CD8-positive, alpha-beta memory T cell (primary cell): ENCODE measurements at regions of chr3 and their contacts with region 1.

Region 1: DNA sequence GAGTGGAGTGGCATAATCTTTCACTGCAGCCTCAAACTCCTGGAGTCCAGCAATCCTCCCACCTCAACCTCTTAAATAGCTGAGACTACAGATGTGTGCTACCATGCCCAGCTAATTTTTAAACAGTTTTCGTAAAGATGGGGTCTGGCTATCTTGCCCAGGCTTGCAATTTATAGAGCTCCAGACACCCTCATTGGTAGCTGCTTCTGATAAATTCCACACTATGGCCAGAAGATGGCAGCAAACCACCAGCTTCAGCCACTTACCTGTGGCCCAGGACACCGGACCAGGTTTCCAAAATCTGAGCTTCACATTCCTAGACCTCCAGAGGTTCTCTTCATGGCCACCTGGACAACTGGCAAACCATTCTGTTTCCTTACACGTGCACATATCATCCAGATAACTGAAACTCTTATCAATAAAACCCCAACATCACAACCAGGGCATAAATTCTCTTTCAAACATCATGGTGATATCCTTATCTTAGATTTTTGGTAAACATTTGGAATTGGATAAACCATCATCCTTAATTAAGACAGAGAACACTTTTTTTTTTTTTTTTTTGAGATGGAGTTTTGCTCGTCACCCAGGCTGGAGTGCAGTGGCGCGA is 28.9 kb downstream of the FBXW12 start:
- DNase-seq: peak; percentile 36 to 76 (median 64)
- H3K4me3 ChIP-seq: no peak overlapping the region
- H3K4me3 Mint-ChIP-seq: no peak overlapping the region
- H3K27ac ChIP-seq: no peak overlapping the region
- H3K27ac Mint-ChIP-seq: no peak overlapping the region
- H3K4me1 ChIP-seq: no peaks in the 10 kb centered on the region
- H3K4me1 Mint-ChIP-seq: no peaks in the 10 kb centered on the region
- H3K27me3 ChIP-seq: no peaks in the 10 kb centered on the region
- H3K27me3 Mint-ChIP-seq: peaks cover 6 to 15% of the 10 kb centered on the region in 2 donors

Region 2: GRCh38 chr3:48135552-48136495 is 265.1 kb before region 1 on chr3:
- CTCF ChIA-PET with region 1: no interaction called
- POLR2A ChIA-PET with region 1: no interaction called
- DNase-seq: no peak
- H3K4me3 ChIP-seq: no peak overlapping the region
- H3K4me3 Mint-ChIP-seq: peak overlapping the region in 1 of 7 donors; percentile 36
- H3K27ac ChIP-seq: no peak overlapping the region
- H3K27ac Mint-ChIP-seq: no peak overlapping the region
- H3K4me1 ChIP-seq: no peaks in the 10 kb centered on the region
- H3K4me1 Mint-ChIP-seq: no peaks in the 10 kb centered on the region
- H3K27me3 ChIP-seq: no peaks in the 10 kb centered on the region
- H3K27me3 Mint-ChIP-seq: no peaks in the 10 kb centered on the region

Region 3: GRCh38 chr3:48446425-48447193 is 45.7 kb after region 1 on chr3 and contains the start of gene ATRIP:
- CTCF ChIA-PET with region 1: interaction called, 17 read pairs
- POLR2A ChIA-PET with region 1: interaction called, 3 read pairs
- DNase-seq: peak; percentile 78 to 89 (median 83)
- H3K4me3 ChIP-seq: peak within 1 kb of the TSS; percentile 88
- H3K4me3 Mint-ChIP-seq: peak within 1 kb of the TSS; percentile 84 to 94 (median 88)
- H3K27ac ChIP-seq: peak within 1 kb of the TSS; percentile 71
- H3K27ac Mint-ChIP-seq: peak within 1 kb of the TSS; percentile 91 to 96 (median 95)
- H3K4me1 ChIP-seq: peaks cover 26% of the 10 kb centered on the region
- H3K4me1 Mint-ChIP-seq: peaks cover 27 to 46% (median 37%) of the 10 kb centered on the region in 3 donors
- H3K27me3 ChIP-seq: no peaks in the 10 kb centered on the region
- H3K27me3 Mint-ChIP-seq: no peaks in the 10 kb centered on the region
- total RNA-seq, gene ATRIP: 22.1 to 22.8 TPM

Region 4: GRCh38 chr3:48507351-48508061 is 106.6 kb after region 1 on chr3:
- CTCF ChIA-PET with region 1: interaction called, 71 read pairs
- POLR2A ChIA-PET with region 1: no interaction called
- DNase-seq: peak; percentile 60 to 86 (median 71)
- H3K4me3 ChIP-seq: no peak overlapping the region
- H3K4me3 Mint-ChIP-seq: peak overlapping the region in 5 of 7 donors; percentile 18 to 62 (median 46)
- H3K27ac ChIP-seq: no peak overlapping the region
- H3K27ac Mint-ChIP-seq: peak overlapping the region; percentile 72 to 89 (median 85)
- H3K4me1 ChIP-seq: peaks cover 38% of the 10 kb centered on the region
- H3K4me1 Mint-ChIP-seq: peaks cover 31 to 48% (median 46%) of the 10 kb centered on the region in 3 donors
- H3K27me3 ChIP-seq: no peaks in the 10 kb centered on the region
- H3K27me3 Mint-ChIP-seq: peaks cover 0 to 9% of the 10 kb centered on the region in 2 donors

Region 5: GRCh38 chr3:48514436-48515227 is 113.7 kb after region 1 on chr3:
- CTCF ChIA-PET with region 1: interaction called, 71 read pairs
- POLR2A ChIA-PET with region 1: no interaction called
- DNase-seq: peak in 2 of 5 donors; percentile 52 to 58
- H3K4me3 ChIP-seq: peak overlapping the region; percentile 8
- H3K4me3 Mint-ChIP-seq: peak overlapping the region in 6 of 7 donors; percentile 62 to 75 (median 68)
- H3K27ac ChIP-seq: no peak overlapping the region
- H3K27ac Mint-ChIP-seq: peak overlapping the region in 7 of 8 donors; percentile 26 to 71 (median 68)
- H3K4me1 ChIP-seq: peaks cover 61% of the 10 kb centered on the region
- H3K4me1 Mint-ChIP-seq: peaks cover 54 to 69% (median 64%) of the 10 kb centered on the region in 3 donors
- H3K27me3 ChIP-seq: no peaks in the 10 kb centered on the region
- H3K27me3 Mint-ChIP-seq: peaks cover 0 to 6% of the 10 kb centered on the region in 2 donors

Region 6: DNA sequence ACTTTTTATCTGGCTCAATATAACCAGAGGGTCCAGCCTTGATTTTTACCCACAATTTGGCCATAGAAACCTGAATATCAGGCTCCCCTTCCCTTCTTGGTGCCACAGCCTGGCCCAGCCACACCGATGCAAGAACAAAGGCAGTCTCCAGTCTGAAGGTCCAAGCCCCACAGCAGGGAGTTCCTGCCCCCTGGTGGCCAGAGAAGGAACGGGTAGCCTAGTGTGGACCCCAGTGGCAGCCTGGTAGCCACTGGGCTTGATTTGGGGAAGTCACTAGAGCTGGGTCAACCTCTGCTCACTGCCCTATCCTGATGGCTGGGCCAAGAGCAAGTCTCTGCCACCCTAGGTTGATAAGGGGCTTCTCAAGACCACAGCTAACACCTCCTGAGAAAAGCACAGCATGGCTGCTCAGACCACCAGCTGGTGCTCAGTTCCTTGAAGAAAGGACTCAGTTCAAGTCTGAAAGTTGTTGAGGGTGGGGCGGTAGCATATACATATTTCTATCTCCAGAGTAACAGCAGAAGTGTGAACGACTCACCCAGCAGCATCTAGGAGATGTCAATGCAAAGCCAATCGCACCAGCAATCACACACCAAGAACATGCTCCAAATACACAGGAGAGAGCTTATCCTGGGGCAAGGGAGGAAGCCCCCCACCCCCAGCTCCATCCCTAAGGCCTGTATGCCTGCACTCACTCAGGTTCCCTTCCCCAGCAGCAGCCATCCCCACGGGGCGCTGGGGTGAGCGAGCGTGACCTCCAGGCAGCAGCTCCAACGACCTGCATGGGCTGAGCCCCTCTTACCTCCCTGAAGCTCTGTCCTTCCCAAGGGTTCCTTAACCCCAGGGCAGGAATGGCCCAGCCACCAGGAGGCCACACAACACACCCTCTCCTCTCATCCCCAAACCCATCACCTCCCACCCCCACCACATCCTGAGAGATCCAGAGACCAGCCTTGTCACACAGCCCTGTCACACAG is 148.1 kb after region 1 on chr3:
- CTCF ChIA-PET with region 1: interaction called, 73 read pairs
- POLR2A ChIA-PET with region 1: interaction called, 3 read pairs
- DNase-seq: peak; percentile 66 to 87 (median 75)
- H3K4me3 ChIP-seq: no peak overlapping the region
- H3K4me3 Mint-ChIP-seq: no peak overlapping the region
- H3K27ac ChIP-seq: no peak overlapping the region
- H3K27ac Mint-ChIP-seq: no peak overlapping the region
- H3K4me1 ChIP-seq: peaks cover 9% of the 10 kb centered on the region
- H3K4me1 Mint-ChIP-seq: peaks cover 0 to 3% (median 3%) of the 10 kb centered on the region in 3 donors
- H3K27me3 ChIP-seq: no peaks in the 10 kb centered on the region
- H3K27me3 Mint-ChIP-seq: peaks cover 0 to 3% of the 10 kb centered on the region in 2 donors

Region 7: DNA sequence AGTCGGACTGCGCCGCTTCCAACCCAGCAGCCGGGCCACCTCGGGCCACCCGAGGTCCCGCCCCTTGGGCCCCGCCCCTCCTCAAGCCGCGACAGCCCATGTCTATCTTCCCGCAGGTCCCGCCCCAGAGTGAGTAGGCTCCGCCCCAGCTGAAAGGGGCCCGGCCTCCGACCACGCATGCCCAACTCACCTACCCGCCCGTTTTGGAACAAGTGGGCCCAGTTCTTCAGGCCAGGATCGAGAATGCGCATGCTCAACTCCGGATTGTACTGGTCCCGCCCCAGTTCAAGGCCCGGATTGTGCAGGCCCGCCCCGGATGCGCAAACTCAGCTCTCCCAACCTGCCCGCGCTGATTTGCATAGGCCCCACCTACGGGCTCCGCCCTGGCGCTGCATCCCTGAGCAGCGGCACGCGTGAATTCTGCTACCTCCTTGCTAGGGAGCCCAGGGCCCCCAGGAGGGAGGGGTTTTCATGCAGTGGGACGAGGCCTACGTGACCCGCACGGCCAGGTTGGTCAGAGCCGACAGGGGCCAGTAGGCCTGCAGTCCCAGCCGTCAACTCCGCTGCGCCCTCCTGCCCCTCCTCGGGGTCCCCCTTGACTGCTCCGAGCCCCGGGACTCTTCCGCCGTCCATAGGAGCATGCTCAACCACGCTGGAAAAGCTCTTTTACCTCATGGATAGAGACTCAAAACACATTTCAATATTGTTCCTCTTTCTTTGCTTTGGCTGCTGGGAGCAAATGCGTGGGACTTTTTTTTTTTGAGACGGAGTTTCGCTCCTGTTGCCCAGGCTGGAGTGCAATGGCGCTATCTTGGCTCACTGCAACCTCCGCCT is 156.1 kb after region 1 on chr3 and contains the start of gene PFKFB4:
- CTCF ChIA-PET with region 1: interaction called, 44 read pairs
- POLR2A ChIA-PET with region 1: interaction called, 3 read pairs
- DNase-seq: peak; percentile 98 to 100 (median 99)
- H3K4me3 ChIP-seq: peak within 1 kb of the TSS; percentile 85
- H3K4me3 Mint-ChIP-seq: peak within 1 kb of the TSS; percentile 62 to 89 (median 80)
- H3K27ac ChIP-seq: peak within 1 kb of the TSS; percentile 51
- H3K27ac Mint-ChIP-seq: peak within 1 kb of the TSS in 7 of 8 donors; percentile 3 to 83 (median 56)
- H3K4me1 ChIP-seq: peaks cover 6% of the 10 kb centered on the region
- H3K4me1 Mint-ChIP-seq: peaks cover 9 to 18% (median 13%) of the 10 kb centered on the region in 3 donors
- H3K27me3 ChIP-seq: no peaks in the 10 kb centered on the region
- H3K27me3 Mint-ChIP-seq: no peaks in the 10 kb centered on the region
- total RNA-seq, gene PFKFB4: 1.8 to 2.2 TPM

Region 8: GRCh38 chr3:48609088-48610005 is 208.4 kb after region 1 on chr3 and contains the start of gene UQCRC1:
- CTCF ChIA-PET with region 1: interaction called, 10 read pairs
- POLR2A ChIA-PET with region 1: no interaction called
- DNase-seq: peak; percentile 88 to 94 (median 92)
- H3K4me3 ChIP-seq: peak within 1 kb of the TSS; percentile 96
- H3K4me3 Mint-ChIP-seq: peak within 1 kb of the TSS; percentile 91 to 100 (median 98)
- H3K27ac ChIP-seq: peak within 1 kb of the TSS; percentile 83
- H3K27ac Mint-ChIP-seq: peak within 1 kb of the TSS; percentile 70 to 99 (median 97)
- H3K4me1 ChIP-seq: peaks cover 13% of the 10 kb centered on the region
- H3K4me1 Mint-ChIP-seq: peaks cover 16 to 23% (median 19%) of the 10 kb centered on the region in 3 donors
- H3K27me3 ChIP-seq: no peaks in the 10 kb centered on the region
- H3K27me3 Mint-ChIP-seq: no peaks in the 10 kb centered on the region
- total RNA-seq, gene UQCRC1: 244 to 245 TPM